ENCODE measurements at regions of chr16 and their contacts with region 1.

Region 1: GRCh38 chr16:75622761-75623605 is at the start of gene ADAT1:
- DNase-seq: peak; percentile 97
- H3K4me3 ChIP-seq: peak within 1 kb of the TSS; percentile 75 to 92 (median 83)
- H3K27ac ChIP-seq: peak within 1 kb of the TSS; percentile 79
- H3K4me1 ChIP-seq: peaks cover 11% of the 10 kb centered on the region
- H3K27me3 ChIP-seq: no peaks in the 10 kb centered on the region
- CTCF ChIP-seq: no peak
- total RNA-seq, gene ADAT1: 62.0 to 86.5 TPM

Region 2: GRCh38 chr16:75432828-75433731 is 189.9 kb before region 1 on chr16 and contains the start of gene CFDP1:
- CTCF ChIA-PET with region 1: no interaction called
- dilution Hi-C with region 1: no loop called
- in situ Hi-C with region 1: no loop called
- intact Hi-C with region 1: loop called (anchors 5 kb)
- DNase-seq: peak; percentile 90
- H3K4me3 ChIP-seq: peak within 1 kb of the TSS; percentile 89 to 98 (median 89)
- H3K27ac ChIP-seq: peak within 1 kb of the TSS; percentile 96
- H3K4me1 ChIP-seq: peaks cover 7% of the 10 kb centered on the region
- H3K27me3 ChIP-seq: no peaks in the 10 kb centered on the region
- CTCF ChIP-seq: no peak
- total RNA-seq, gene CFDP1: 18.0 to 35.9 TPM

Region 3: GRCh38 chr16:75464130-75464918 is 158.7 kb before region 1 on chr16 and contains the start of gene TMEM170A:
- CTCF ChIA-PET with region 1: no interaction called
- dilution Hi-C with region 1: no loop called
- in situ Hi-C with region 1: no loop called
- intact Hi-C with region 1: loop called (anchors 2 kb)
- DNase-seq: peak; percentile 99
- H3K4me3 ChIP-seq: peak within 1 kb of the TSS; percentile 89 to 93 (median 90)
- H3K27ac ChIP-seq: peak within 1 kb of the TSS; percentile 81
- H3K4me1 ChIP-seq: peaks cover 12% of the 10 kb centered on the region
- H3K27me3 ChIP-seq: no peaks in the 10 kb centered on the region
- CTCF ChIP-seq: peak; percentile 99 to 100
- total RNA-seq, gene TMEM170A: 12.5 to 15.6 TPM

Region 4: GRCh38 chr16:75566040-75566810 is 56.8 kb before region 1 on chr16 and contains the start of gene GABARAPL2:
- CTCF ChIA-PET with region 1: interaction called, 3 read pairs
- dilution Hi-C with region 1: no loop called
- in situ Hi-C with region 1: no loop called
- intact Hi-C with region 1: loop called (anchors 1 kb)
- DNase-seq: peak; percentile 70
- H3K4me3 ChIP-seq: peak within 1 kb of the TSS; percentile 73 to 87 (median 78)
- H3K27ac ChIP-seq: peak within 1 kb of the TSS; percentile 69
- H3K4me1 ChIP-seq: peaks cover 11% of the 10 kb centered on the region
- H3K27me3 ChIP-seq: no peaks in the 10 kb centered on the region
- CTCF ChIP-seq: no peak
- total RNA-seq, gene GABARAPL2: 41.2 to 63.2 TPM

Region 5: DNA sequence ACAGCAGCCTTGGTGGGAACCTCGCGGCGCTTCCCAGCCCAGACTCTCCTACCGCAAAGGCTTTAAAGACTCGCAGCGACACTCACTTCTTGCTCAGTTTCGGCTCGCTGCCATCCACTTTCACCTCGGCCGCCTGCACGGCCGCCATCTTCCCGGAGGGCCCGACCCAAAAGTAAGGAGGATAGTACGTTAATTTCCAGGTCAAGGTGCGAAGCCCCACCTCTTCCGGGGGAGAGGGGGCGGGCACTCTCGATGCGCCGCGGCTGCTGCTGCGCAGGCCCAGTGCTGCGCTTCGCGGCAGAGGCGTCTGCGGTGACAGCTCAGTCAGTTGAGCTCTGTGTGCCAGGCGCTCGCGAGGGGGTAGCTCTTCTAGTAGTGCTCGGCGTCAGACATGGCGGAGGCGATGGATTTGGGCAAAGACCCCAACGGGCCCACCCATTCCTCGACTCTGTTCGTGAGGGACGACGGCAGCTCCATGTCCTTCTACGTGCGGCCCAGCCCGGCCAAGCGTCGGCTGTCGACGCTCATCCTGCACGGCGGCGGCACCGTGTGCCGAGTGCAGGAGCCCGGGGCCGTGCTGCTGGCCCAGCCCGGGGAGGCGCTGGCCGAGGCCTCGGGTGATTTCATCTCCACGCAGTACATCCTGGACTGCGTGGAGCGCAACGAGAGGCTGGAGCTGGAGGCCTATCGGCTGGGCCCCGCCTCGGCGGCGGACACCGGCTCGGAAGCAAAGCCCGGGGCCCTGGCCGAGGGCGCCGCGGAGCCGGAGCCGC is 24.7 kb after region 1 on chr16 and contains the starts of genes KARS1 and TERF2IP:
- CTCF ChIA-PET with region 1: no interaction called
- dilution Hi-C with region 1: no loop called
- in situ Hi-C with region 1: no loop called
- intact Hi-C with region 1: loop called (anchors 2 kb)
- DNase-seq: peak; percentile 93
- H3K4me3 ChIP-seq: peak within 1 kb of the TSS; percentile 88 to 95 (median 92)
- H3K27ac ChIP-seq: peak within 1 kb of the TSS; percentile 82
- H3K4me1 ChIP-seq: peaks cover 25% of the 10 kb centered on the region
- H3K27me3 ChIP-seq: no peaks in the 10 kb centered on the region
- CTCF ChIP-seq: no peak
- total RNA-seq, gene KARS1: 114 to 162 TPM
- total RNA-seq, gene TERF2IP: 31.7 to 40.3 TPM

Region 6: DNA sequence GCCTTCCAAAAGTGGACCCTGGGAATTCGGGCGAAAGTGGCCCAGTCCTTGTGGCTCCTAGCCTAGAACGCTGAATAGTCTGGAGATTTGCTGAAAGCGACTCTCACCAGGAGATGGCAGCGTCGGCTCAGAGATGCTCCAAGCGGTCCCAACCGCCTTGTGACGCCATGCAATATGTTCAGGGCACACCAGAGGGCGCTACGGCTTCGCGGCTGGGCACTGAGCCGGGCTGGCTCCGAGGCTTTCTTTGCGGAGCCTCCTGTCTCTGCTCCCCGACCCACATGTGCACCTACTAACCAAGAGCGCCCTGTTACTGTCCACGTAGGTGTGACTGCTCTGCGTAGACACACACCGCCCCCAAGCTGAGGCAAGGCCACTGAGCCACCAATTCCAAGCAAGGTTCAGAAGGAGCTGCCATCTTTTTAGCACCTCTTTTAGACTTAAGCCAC is 1613.1 kb after region 1 on chr16:
- CTCF ChIA-PET with region 1: no interaction called
- dilution Hi-C with region 1: no loop called
- in situ Hi-C with region 1: no loop called
- intact Hi-C with region 1: no loop called
- DNase-seq: peak; percentile 59
- H3K4me3 ChIP-seq: no peak overlapping the region
- H3K27ac ChIP-seq: no peak overlapping the region
- H3K4me1 ChIP-seq: no peaks in the 10 kb centered on the region
- H3K27me3 ChIP-seq: no peaks in the 10 kb centered on the region
- CTCF ChIP-seq: peak; percentile 99 to 100

Measured in mammary epithelial cell (primary cell).